Natural killer cell (primary cell): ENCODE measurements at regions of chr9 and their contacts with region 1.

Region 1: DNA sequence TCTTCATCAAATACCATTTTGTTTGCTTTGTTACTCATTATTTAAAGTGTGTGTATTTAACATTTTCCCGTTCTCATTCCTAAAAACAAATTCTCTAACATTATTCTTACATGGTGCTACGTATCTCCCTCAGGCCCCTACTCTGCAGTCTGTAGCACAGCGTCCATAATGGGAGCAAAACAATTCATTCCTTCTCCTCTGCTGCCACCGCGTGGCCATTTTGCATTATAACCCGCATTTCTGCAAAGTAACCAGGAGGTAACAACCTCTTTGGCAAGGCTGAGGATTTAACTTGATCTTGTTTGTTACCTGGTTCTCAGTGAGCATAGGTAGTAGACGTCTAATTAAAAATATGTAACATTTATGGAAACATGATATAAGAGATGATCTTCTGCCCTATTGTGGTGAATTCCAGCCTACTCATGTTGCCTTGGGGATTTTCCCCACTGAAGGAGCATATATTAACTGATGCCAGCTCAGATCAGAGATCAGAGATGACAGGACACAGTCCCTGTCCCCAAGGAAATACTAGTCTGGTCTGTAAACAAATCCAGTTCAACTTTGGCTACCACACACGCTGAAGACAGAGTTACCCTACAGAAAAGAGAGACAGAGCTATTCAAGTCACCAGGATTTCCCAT is 10.5 kb downstream of the OR1K1 start:
- DNase-seq: peak; percentile 69 to 90
- ATAC-seq: peak; percentile 88 to 99 (median 97)
- H3K4me3 ChIP-seq: no peak overlapping the region
- H3K4me3 Mint-ChIP-seq: no peak overlapping the region
- H3K27ac ChIP-seq: no peak overlapping the region
- H3K27ac Mint-ChIP-seq: no peak overlapping the region
- H3K4me1 ChIP-seq: peaks cover 10% of the 10 kb centered on the region
- H3K4me1 Mint-ChIP-seq: peaks cover 3 to 14% of the 10 kb centered on the region in 2 donors
- H3K27me3 ChIP-seq: no peaks in the 10 kb centered on the region
- H3K27me3 Mint-ChIP-seq: no peaks in the 10 kb centered on the region
- CTCF ChIP-seq: peak; percentile 91

Region 2: DNA sequence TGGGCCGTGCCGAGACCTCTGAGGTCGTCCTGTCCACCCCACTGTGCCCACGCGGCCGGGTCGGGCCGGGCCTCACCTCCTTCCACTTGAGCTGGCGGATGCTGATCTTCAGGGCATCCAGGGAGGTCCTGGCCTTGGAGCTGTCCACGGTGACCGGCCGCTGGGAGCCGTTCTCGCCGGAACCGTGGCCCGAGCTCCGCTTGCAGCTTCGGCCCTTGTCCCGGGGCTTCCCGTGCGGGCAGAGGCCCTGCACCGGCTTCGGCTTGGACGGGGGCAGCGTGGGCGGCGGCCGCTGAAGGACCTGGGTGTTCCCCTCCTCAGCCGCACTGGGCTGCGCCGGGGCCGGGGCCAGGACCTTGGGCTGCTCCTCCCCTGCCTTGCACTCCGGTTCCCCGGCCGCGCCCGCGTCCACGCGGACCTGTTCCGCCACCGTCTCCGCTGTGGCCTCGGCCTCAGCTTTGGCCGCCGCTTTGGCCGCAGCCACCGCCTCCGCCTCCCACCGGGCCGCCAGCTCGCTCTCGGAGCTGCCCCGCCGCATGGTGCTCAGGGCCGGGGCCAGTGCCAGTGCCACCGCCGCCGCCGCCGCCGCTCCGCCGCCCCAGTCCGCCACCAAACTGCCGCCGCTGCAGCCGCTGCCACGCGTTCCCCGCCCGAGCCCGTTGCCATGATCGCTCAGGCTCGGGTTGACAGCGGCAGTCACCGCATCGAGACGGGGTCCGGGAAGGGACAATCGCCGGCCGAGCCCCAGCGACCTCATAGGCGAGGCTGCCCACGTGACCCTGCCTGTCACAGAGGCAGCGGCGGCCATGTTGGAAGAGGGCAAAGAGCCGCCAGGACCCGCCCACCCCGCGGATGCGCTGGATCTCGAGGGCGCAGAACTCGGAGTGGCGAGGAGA is 717.6 kb before region 1 on chr9 and contains the start of gene TTLL11:
- intact Hi-C with region 1: loop called (anchors 1 kb)
- DNase-seq: peak; percentile 96 to 97
- ATAC-seq: peak; percentile 94 to 96 (median 95)
- H3K4me3 ChIP-seq: peak within 1 kb of the TSS; percentile 59
- H3K4me3 Mint-ChIP-seq: peak within 1 kb of the TSS; percentile 92
- H3K27ac ChIP-seq: no peak within 1 kb of the TSS
- H3K27ac Mint-ChIP-seq: peak within 1 kb of the TSS; percentile 59 to 85
- H3K4me1 ChIP-seq: peaks cover 22% of the 10 kb centered on the region
- H3K4me1 Mint-ChIP-seq: peaks cover 44% of the 10 kb centered on the region in 2 donors
- H3K27me3 ChIP-seq: no peaks in the 10 kb centered on the region
- H3K27me3 Mint-ChIP-seq: peaks cover 7 to 8% of the 10 kb centered on the region in 2 donors
- CTCF ChIP-seq: no peak
- total RNA-seq, gene TTLL11: 3.4 to 4.6 (median 3.6) TPM

Region 3: DNA sequence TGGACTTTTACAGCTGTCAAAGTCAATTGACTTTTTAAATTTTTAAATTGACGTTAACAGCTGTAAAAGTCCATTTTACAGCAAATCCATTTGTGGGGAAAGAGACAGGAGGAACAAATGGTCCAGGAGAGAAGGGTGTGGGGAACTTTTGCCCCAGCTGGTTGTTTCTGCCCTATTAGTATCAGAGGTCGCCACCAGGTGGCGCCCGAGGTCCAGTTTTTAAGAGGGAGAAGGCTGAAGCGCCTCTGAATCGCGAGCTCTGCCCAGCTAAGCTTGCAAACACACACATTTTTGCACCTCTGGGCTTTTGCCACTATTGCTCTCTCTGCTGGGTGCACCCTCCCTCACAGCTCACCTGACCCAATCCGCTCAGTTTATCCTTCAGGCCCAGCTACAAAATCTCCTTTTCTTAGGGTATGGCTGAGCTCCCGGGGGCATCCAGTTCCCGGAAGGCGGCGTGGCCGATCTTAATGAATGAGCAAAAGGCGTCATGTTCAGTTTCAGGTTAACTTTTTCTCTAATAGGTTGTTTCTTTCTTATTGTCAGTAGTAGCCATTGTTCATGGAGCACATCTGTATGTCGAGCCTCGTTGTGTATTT is 711.1 kb before region 1 on chr9:
- intact Hi-C with region 1: loop called (anchors 1 kb)
- DNase-seq: peak; percentile 81 to 89
- ATAC-seq: peak; percentile 79 to 91 (median 85)
- H3K4me3 ChIP-seq: no peak overlapping the region
- H3K4me3 Mint-ChIP-seq: no peak overlapping the region
- H3K27ac ChIP-seq: no peak overlapping the region
- H3K27ac Mint-ChIP-seq: no peak overlapping the region
- H3K4me1 ChIP-seq: peaks cover 12% of the 10 kb centered on the region
- H3K4me1 Mint-ChIP-seq: peaks cover 11 to 17% of the 10 kb centered on the region in 2 donors
- H3K27me3 ChIP-seq: no peaks in the 10 kb centered on the region
- H3K27me3 Mint-ChIP-seq: peaks cover 8 to 9% of the 10 kb centered on the region in 2 donors
- CTCF ChIP-seq: peak; percentile 86

Region 4: GRCh38 chr9:122125158-122125508 is 685.3 kb before region 1 on chr9:
- intact Hi-C with region 1: loop called (anchors 1 kb)
- DNase-seq: peak; percentile 78 to 88
- ATAC-seq: peak; percentile 72 to 80 (median 80)
- H3K4me3 ChIP-seq: no peak overlapping the region
- H3K4me3 Mint-ChIP-seq: peak overlapping the region; percentile 80
- H3K27ac ChIP-seq: no peak overlapping the region
- H3K27ac Mint-ChIP-seq: peak overlapping the region in 1 of 2 donors; percentile 62
- H3K4me1 ChIP-seq: peaks cover 35% of the 10 kb centered on the region
- H3K4me1 Mint-ChIP-seq: peaks cover 14 to 30% of the 10 kb centered on the region in 2 donors
- H3K27me3 ChIP-seq: peaks cover 7% of the 10 kb centered on the region
- H3K27me3 Mint-ChIP-seq: peaks cover 13 to 25% of the 10 kb centered on the region in 2 donors
- CTCF ChIP-seq: peak; percentile 82

Region 5: DNA sequence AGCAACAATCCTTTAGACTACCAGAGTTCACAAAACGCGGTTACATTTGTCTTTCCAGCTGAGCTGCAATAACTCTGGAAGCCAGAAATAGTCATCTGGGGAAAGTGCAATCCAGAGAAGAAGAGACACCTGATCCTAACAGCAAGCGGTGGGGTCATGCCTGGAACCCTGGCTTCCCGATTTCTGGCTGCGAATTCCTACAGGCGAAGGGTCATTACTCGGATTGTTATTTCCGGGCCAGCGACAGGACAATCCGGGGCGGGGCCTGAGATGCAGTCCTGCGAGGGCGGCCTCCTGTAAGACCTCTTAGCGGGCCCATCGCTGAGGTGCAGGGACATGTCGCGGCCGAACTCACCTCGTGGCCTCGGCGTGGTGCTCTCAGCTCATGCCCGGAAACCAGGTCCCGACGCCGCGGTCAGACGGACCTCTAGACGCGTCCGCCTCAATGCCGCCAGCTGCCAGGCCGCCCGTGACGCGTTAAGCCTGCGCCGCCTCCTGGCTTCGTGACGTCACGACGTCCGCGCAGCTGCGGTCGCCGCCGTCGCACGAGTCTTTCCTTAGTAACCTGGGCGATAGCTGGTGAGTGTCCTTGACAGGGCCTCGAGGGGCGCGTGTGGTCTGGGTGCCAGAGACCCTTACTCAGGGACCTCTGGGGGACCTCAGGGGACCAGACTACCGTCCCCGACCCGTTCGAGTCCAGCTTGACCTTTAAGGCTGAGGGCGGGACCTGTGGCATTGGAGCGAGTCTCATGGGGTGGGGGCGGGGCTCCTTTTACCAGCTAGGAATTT is 545.9 kb before region 1 on chr9 and contains the starts of genes MRRF and RBM18:
- intact Hi-C with region 1: loop called (anchors 10 kb)
- DNase-seq: peak; percentile 96
- ATAC-seq: peak; percentile 78 to 91 (median 82)
- H3K4me3 ChIP-seq: peak within 1 kb of the TSS; percentile 88
- H3K4me3 Mint-ChIP-seq: peak within 1 kb of the TSS; percentile 99
- H3K27ac ChIP-seq: peak within 1 kb of the TSS; percentile 85
- H3K27ac Mint-ChIP-seq: peak within 1 kb of the TSS; percentile 99 to 100
- H3K4me1 ChIP-seq: peaks cover 13% of the 10 kb centered on the region
- H3K4me1 Mint-ChIP-seq: peaks cover 57% of the 10 kb centered on the region in 2 donors
- H3K27me3 ChIP-seq: no peaks in the 10 kb centered on the region
- H3K27me3 Mint-ChIP-seq: no peaks in the 10 kb centered on the region
- CTCF ChIP-seq: no peak
- total RNA-seq, gene MRRF: 17.7 to 29.9 (median 21.3) TPM
- total RNA-seq, gene RBM18: 24.9 to 30.9 (median 29.7) TPM

Region 6: GRCh38 chr9:122350638-122351355 is 459.6 kb before region 1 on chr9:
- intact Hi-C with region 1: loop called (anchors 1 kb)
- DNase-seq: peak; percentile 78 to 83
- ATAC-seq: peak; percentile 84 to 88 (median 85)
- H3K4me3 ChIP-seq: no peak overlapping the region
- H3K4me3 Mint-ChIP-seq: no peak overlapping the region
- H3K27ac ChIP-seq: no peak overlapping the region
- H3K27ac Mint-ChIP-seq: no peak overlapping the region
- H3K4me1 ChIP-seq: peaks cover 12% of the 10 kb centered on the region
- H3K4me1 Mint-ChIP-seq: peaks cover 0 to 17% of the 10 kb centered on the region in 2 donors
- H3K27me3 ChIP-seq: peaks cover 5% of the 10 kb centered on the region
- H3K27me3 Mint-ChIP-seq: peaks cover 20 to 29% of the 10 kb centered on the region in 2 donors
- CTCF ChIP-seq: peak; percentile 94

Region 7: GRCh38 chr9:122464633-122465567 is 345.5 kb before region 1 on chr9:
- intact Hi-C with region 1: loop called (anchors 1 kb)
- DNase-seq: peak; percentile 39 to 79
- ATAC-seq: peak; percentile 77 to 89 (median 89)
- H3K4me3 ChIP-seq: peak overlapping the region; percentile 60
- H3K4me3 Mint-ChIP-seq: peak overlapping the region; percentile 91
- H3K27ac ChIP-seq: peak overlapping the region; percentile 59
- H3K27ac Mint-ChIP-seq: peak overlapping the region; percentile 88 to 92
- H3K4me1 ChIP-seq: peaks cover 10% of the 10 kb centered on the region
- H3K4me1 Mint-ChIP-seq: peaks cover 7% of the 10 kb centered on the region in 2 donors
- H3K27me3 ChIP-seq: peaks cover 3% of the 10 kb centered on the region
- H3K27me3 Mint-ChIP-seq: peaks cover 27 to 65% of the 10 kb centered on the region in 2 donors
- CTCF ChIP-seq: peak; percentile 94